Natural killer cell (primary cell): ENCODE measurements at regions of chr16 and their contacts with region 1.

Region 1: DNA sequence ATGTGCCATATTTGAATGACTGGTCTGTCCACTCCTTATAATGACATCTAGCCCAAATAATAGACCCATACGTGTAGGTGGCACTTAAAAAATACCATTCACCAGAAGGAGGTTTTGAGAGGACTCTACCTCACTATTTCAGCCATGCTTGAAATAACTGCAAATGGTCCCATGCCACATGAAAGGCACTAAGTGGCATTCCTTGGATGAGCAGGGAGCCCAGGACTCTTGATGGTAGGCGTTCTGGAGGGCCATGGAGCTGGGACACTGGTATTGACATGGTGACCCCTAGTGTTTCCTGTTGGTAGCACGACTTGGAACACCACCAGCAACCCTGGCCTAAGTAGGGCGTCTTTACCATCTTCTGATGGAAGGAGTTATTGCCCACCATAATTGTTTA is 148.7 kb upstream of the ZFHX3 start:
- DNase-seq: peak; percentile 35 to 48
- ATAC-seq: peak; percentile 67 to 90 (median 77)
- H3K4me3 ChIP-seq: no peak overlapping the region
- H3K4me3 Mint-ChIP-seq: no peak overlapping the region
- H3K27ac ChIP-seq: no peak overlapping the region
- H3K27ac Mint-ChIP-seq: no peak overlapping the region
- H3K4me1 ChIP-seq: no peaks in the 10 kb centered on the region
- H3K4me1 Mint-ChIP-seq: no peaks in the 10 kb centered on the region
- H3K27me3 ChIP-seq: no peaks in the 10 kb centered on the region
- H3K27me3 Mint-ChIP-seq: peaks cover 3 to 7% of the 10 kb centered on the region in 2 donors
- CTCF ChIP-seq: peak; percentile 77

Region 2: DNA sequence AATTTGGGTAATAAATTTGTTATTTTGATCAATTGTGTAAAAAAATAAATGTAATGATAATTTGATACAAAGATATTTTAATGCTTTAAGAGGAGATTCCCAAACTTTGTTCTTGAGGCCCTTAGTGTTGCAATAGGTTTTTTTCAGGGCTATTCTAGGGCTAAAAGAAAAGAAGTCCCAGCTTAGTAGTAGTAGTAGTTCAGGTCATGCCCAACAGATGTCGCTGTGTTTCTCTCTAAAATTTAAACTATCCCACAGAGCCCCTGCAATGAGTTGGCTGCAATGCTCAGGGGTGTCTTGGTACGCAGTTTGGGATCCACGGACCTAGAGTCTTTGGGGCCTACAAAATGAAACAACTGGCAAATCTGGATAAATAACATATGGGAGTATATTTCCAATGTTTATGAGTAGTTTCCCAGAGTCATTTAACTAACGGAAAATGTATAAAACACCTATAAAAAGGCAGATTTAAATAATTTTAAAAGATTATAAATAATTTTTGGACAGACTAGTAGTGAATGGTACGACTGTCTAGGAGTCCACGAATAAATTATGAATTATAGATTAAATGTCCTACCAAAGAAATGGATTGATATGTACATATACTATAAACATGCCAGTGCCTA is 796.3 kb before region 1 on chr16:
- intact Hi-C with region 1: loop called (anchors 5 kb)
- DNase-seq: peak in 1 of 2 donors; percentile 54
- ATAC-seq: peak in 1 of 3 donors; percentile 66
- H3K4me3 ChIP-seq: no peak overlapping the region
- H3K4me3 Mint-ChIP-seq: no peak overlapping the region
- H3K27ac ChIP-seq: no peak overlapping the region
- H3K27ac Mint-ChIP-seq: no peak overlapping the region
- H3K4me1 ChIP-seq: no peaks in the 10 kb centered on the region
- H3K4me1 Mint-ChIP-seq: no peaks in the 10 kb centered on the region
- H3K27me3 ChIP-seq: no peaks in the 10 kb centered on the region
- H3K27me3 Mint-ChIP-seq: no peaks in the 10 kb centered on the region
- CTCF ChIP-seq: peak; percentile 75

Region 3: GRCh38 chr16:72501739-72502593 is 694.7 kb before region 1 on chr16:
- intact Hi-C with region 1: loop called (anchors 2 kb)
- DNase-seq: peak in 1 of 2 donors; percentile 51
- ATAC-seq: peak in 1 of 3 donors; percentile 47
- H3K4me3 ChIP-seq: no peak overlapping the region
- H3K4me3 Mint-ChIP-seq: no peak overlapping the region
- H3K27ac ChIP-seq: no peak overlapping the region
- H3K27ac Mint-ChIP-seq: no peak overlapping the region
- H3K4me1 ChIP-seq: no peaks in the 10 kb centered on the region
- H3K4me1 Mint-ChIP-seq: no peaks in the 10 kb centered on the region
- H3K27me3 ChIP-seq: no peaks in the 10 kb centered on the region
- H3K27me3 Mint-ChIP-seq: no peaks in the 10 kb centered on the region
- CTCF ChIP-seq: no peak

Region 4: DNA sequence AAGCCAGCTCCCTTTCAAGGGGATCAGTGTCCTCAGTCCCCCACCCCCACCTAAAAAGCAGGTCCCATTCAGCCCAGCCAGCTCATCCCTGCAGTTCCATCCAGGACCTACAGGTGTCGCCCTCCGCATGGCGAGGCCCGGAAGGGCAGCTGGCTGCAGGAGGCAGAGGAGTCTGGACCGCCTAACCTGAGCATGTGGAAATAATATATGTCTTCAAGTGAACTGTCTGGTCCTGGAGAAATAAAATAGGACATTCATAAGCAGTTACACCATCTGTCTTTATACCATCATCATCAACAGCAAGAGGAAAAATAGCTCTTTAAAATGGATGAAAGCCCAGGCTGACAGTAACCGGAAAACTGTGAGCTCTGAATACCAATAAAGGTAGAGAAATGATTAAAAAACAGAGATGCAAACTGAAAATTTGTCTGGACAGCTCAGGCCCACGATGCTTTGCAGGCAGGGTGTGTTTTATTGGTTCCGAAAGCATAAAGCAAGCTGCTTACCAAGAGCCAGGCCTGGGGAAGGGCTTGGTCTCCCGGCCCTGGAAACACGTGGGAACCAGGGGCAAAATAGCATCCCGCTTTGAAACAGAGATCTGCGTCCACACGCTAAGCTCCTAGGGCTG is 363.9 kb before region 1 on chr16:
- intact Hi-C with region 1: loop called (anchors 1 kb)
- DNase-seq: peak; percentile 70 to 72
- ATAC-seq: peak; percentile 83 to 97 (median 85)
- H3K4me3 ChIP-seq: no peak overlapping the region
- H3K4me3 Mint-ChIP-seq: no peak overlapping the region
- H3K27ac ChIP-seq: no peak overlapping the region
- H3K27ac Mint-ChIP-seq: no peak overlapping the region
- H3K4me1 ChIP-seq: no peaks in the 10 kb centered on the region
- H3K4me1 Mint-ChIP-seq: peaks cover 7% of the 10 kb centered on the region in 2 donors
- H3K27me3 ChIP-seq: no peaks in the 10 kb centered on the region
- H3K27me3 Mint-ChIP-seq: no peaks in the 10 kb centered on the region
- CTCF ChIP-seq: peak; percentile 99

Region 5: GRCh38 chr16:73131156-73131862 is 65.4 kb before region 1 on chr16:
- intact Hi-C with region 1: loop called (anchors 2 kb)
- DNase-seq: no peak
- ATAC-seq: no peak
- H3K4me3 ChIP-seq: no peak overlapping the region
- H3K4me3 Mint-ChIP-seq: no peak overlapping the region
- H3K27ac ChIP-seq: no peak overlapping the region
- H3K27ac Mint-ChIP-seq: peak overlapping the region in 1 of 2 donors; percentile 35
- H3K4me1 ChIP-seq: no peaks in the 10 kb centered on the region
- H3K4me1 Mint-ChIP-seq: peaks cover 0 to 5% of the 10 kb centered on the region in 2 donors
- H3K27me3 ChIP-seq: no peaks in the 10 kb centered on the region
- H3K27me3 Mint-ChIP-seq: no peaks in the 10 kb centered on the region
- CTCF ChIP-seq: no peak